ENCODE measurements at regions of chr18 and their contacts with region 1.

Region 1: GRCh38 chr18:31977270-31977872 is 34.4 kb upstream of the TRAPPC8 start:
- DNase-seq: peak; percentile 83
- H3K4me3 ChIP-seq: no peak overlapping the region
- H3K27ac ChIP-seq: no peak overlapping the region
- H3K4me1 ChIP-seq: no peaks in the 10 kb centered on the region
- H3K27me3 ChIP-seq: no peaks in the 10 kb centered on the region
- CTCF ChIP-seq: peak; percentile 78

Region 2: DNA sequence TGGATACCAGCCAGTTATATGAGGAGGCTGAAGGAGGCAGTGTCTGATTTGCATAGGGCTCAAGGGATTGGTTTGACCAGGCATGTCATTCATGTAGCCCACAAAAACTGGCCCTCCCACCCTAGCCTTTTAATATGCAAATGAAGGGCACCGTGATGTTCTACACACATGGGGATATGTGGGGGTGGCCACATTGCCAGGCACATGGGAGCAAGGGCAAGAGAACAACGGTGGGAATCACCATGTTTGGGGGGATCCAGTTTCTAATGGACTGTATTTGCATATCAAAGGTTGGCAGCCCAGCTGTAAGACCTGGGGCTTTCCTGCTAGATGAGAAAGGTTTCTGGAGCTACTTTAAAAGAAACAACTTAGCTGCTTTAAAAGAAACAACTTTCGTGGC is 151.6 kb before region 1 on chr18:
- CTCF ChIA-PET with region 1: no interaction called
- POLR2A ChIA-PET with region 1: no interaction called
- intact Hi-C with region 1: loop called (anchors 5 kb)
- DNase-seq: no peak
- H3K4me3 ChIP-seq: no peak overlapping the region
- H3K27ac ChIP-seq: no peak overlapping the region
- H3K4me1 ChIP-seq: no peaks in the 10 kb centered on the region
- H3K27me3 ChIP-seq: no peaks in the 10 kb centered on the region
- CTCF ChIP-seq: no peak

Region 3: DNA sequence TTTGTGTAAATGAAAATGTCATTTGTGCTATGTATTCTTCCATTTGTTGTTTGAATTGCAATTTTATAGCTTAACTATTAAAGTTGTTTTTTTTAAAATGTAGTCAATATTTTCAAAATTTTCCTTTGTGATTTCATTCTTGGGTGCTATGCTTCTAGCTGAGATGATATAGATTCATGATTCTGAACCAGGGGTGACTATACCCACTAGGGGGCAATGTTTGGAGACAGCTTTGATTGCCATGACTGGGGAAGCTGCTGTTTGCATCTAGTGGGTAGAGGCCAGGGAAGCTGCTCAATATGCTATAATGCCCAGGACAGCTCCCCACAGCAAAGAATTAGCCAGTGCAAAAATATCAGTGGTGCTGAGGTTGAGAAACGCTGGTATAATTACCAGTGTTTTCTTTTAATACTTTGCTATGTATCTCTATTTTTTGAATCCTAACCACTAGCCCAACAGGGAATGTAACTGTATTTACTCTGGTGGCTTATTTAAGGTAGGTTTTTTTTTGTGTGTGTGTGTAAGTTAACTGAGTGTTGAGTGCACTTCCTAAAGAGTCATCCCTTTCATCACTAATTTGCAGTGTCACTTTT is 312.2 kb after region 1 on chr18:
- CTCF ChIA-PET with region 1: no interaction called
- POLR2A ChIA-PET with region 1: no interaction called
- intact Hi-C with region 1: no loop called
- DNase-seq: peak; percentile 85
- H3K4me3 ChIP-seq: no peak overlapping the region
- H3K27ac ChIP-seq: no peak overlapping the region
- H3K4me1 ChIP-seq: no peaks in the 10 kb centered on the region
- H3K27me3 ChIP-seq: no peaks in the 10 kb centered on the region
- CTCF ChIP-seq: peak; percentile 86

Region 4: DNA sequence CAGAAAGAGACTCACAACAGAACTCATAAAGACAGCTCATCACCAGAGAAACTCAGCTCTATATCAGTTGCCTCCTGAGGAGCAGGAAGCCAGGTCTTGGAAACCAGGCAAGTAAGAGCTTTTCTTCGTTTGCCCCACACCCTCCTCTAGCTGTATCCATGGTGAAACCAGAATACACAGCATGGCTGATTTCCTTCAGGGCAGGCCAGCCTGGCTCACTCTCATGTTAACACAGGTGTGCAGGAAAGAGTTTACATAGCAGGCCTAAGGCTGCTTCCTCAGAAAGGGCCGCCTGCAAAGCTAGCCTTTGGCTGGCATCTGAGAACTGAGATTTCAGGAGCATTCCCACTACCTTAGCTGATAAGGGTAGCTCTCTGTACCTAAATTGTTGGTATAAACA is 729.8 kb after region 1 on chr18:
- CTCF ChIA-PET with region 1: no interaction called
- POLR2A ChIA-PET with region 1: no interaction called
- intact Hi-C with region 1: no loop called
- DNase-seq: no peak
- H3K4me3 ChIP-seq: no peak overlapping the region
- H3K27ac ChIP-seq: no peak overlapping the region
- H3K4me1 ChIP-seq: no peaks in the 10 kb centered on the region
- H3K27me3 ChIP-seq: no peaks in the 10 kb centered on the region
- CTCF ChIP-seq: no peak

Measured in A673 (cell line).